Astrocyte of the cerebellum (primary cell): ENCODE measurements at regions of chr21 and their contacts with region 1.

Region 1: DNA sequence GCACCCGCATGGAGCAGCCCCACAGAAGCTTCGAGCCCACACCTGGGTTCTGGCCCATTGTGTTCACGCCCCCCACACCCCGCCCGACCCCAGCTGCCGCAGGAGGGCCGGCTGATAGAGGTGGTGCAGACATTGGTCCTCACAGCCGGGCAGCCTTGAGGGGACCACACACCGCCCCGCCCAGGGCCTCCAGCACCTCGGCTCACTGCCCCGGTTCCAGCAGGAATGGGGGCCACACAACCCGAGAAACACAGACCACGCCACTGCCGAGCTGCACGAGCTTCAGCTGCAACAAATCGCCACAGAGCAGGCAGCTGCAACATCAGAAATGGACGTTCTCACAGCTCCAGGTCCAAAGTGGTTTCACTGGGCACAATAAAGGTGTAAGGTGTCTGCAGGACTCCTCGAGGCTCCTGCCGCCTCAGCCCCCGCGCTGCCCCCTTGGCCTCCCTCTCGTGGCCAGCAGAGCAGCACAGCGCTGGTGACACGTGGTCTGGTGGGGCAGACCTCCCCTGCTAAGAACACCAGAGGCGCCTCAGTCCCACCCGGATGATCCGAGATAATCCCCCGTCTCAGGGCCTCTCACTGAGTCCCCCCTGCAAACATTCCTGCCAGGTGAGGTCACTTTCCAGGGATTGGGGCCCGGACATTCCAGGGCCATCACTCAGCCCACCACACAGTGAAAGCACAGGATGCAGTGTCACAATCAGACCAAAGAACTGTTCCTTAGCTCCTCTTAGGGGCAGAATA is 62.3 kb upstream of the ADARB1 start:
- DNase-seq: peak; percentile 77
- H3K4me3 ChIP-seq: no peak overlapping the region
- CTCF ChIP-seq: no peak

Region 2: GRCh38 chr21:45074048-45074817 is 62.1 kb after region 1 on chr21 and contains the start of gene ADARB1:
- in situ Hi-C with region 1: loop called (anchors 10 kb)
- DNase-seq: no peak
- H3K4me3 ChIP-seq: peak within 1 kb of the TSS; percentile 62
- CTCF ChIP-seq: no peak